Posterior vena cava (tissue), 2 donors: ENCODE measurements at regions of chr14 and their contacts with region 1.

Region 1: DNA sequence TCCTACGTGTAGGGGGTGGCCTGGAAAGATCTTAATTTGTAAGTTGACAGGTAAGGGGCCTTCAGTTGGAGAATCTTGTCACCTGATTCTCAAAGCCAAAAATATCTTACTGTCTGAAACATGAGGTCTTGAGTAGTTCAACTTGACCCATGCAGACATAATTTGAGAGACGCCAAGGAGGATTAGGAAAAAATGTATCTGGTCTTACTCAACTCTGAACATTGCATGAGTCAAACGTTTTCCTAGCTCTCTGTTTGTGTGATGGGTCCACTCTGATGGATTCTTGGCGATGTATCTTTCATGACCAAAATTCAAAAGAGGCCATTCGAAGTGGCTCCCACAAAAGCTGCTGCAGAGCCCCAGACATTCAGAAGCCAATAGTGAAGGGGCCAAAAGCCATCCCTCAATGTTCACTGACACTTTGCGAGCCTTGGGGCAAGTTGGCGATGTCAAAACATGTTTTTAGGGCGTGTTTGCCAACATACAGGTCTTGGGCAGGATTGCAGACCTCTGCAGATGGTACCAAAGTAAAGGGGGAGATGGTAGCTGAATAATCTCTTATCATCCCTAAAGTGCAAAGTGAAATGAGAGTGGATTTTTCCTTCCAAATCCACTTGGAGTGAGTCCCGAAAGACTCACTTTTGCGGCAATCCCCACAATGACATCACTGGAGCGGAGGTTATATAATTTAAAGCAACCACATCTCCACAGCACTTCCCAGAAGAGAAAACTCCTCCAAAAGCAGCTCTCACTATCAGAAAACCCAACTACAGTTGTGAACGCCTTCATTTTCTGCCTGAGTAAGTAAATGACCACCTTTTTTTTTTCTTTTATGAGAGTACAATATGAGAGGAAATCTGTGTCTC is at the start of gene BDKRB1:
- DNase-seq: no peak
- total RNA-seq, gene BDKRB1: 0.24 to 0.56 TPM

Region 2: GRCh38 chr14:94780536-94781399 is 1475.0 kb before region 1 on chr14:
- intact Hi-C with region 1: loop called in 1 of 2 experiments (anchors 5 kb)
- DNase-seq: no peak